Common myeloid progenitor, CD34-positive (primary cell): ENCODE measurements at regions of chr1 and their contacts with region 1.

Region 1: DNA sequence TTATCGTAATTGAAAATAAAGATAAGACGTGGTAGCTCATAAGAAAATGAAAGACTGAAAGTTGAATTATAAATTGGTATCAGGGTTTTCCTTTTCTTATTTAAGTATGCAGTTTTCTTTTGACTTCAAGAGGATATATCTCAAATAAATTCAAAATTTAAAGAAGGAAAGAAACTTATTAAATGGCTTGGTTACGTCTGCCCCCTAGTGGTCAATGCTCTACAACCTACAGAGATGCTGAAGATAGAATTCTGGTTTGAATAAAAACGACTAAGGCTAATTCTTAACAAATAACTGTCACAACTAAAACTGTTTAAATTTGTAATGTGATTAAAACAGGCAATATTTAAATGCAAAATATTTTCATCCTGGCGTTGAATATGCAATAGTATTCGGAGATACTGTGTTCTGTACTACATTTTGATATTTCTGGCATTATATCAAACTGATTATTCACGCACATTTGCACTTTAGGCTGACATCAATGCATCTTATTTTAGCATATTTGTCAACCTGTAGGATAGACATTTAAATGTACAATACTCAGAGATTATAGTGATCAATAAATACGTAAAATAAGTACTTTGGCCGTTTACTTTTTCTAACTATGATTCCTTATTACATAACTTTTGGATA is 26.8 kb downstream of the IFI44 start:
- DNase-seq: peak; percentile 75 to 89 (median 81)
- H3K4me3 ChIP-seq: no peak overlapping the region
- H3K27ac ChIP-seq: no peak overlapping the region
- H3K4me1 ChIP-seq: peaks cover 0 to 4% (median 0%) of the 10 kb centered on the region in 4 experiments
- H3K27me3 ChIP-seq: no peaks in the 10 kb centered on the region

Region 2: DNA sequence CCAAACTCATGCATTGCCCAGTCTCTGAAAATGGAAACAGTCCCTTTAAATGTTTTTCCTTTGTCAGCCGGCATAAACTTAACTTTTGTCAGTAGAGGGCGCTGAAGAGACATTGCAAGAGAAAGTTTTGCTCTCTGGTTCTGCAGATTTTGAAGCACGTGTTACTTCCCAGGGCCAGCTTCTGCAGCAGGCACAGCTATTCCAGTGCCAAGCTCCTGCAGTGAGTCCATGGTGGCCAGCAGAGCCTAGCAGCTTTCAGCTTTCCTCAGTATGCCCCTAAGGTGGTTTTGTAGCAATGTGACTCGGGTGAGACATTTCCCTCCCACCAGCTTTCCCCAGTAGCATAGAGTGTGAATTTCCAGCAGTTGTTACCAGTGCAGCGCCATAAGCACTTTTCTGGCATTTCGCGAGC is 58.8 kb before region 1 on chr1:
- CTCF ChIA-PET with region 1: interaction called, 24 read pairs
- POLR2A ChIA-PET with region 1: no interaction called
- DNase-seq: peak; percentile 84 to 92 (median 88)
- H3K4me3 ChIP-seq: no peak overlapping the region
- H3K27ac ChIP-seq: no peak overlapping the region
- H3K4me1 ChIP-seq: peaks cover 0 to 17% (median 7%) of the 10 kb centered on the region in 4 experiments
- H3K27me3 ChIP-seq: no peaks in the 10 kb centered on the region